Calu3 (cell line): ENCODE measurements at regions of chr5 and their contacts with region 1.

Region 1: GRCh38 chr5:96336351-96336985 is 96.6 kb downstream of the PCSK1 start:
- DNase-seq: peak; percentile 77
- H3K4me3 Mint-ChIP-seq: no peak overlapping the region
- H3K27ac Mint-ChIP-seq: no peak overlapping the region
- H3K4me1 Mint-ChIP-seq: peaks cover 29% of the 10 kb centered on the region
- H3K27me3 Mint-ChIP-seq: no peaks in the 10 kb centered on the region
- CTCF ChIP-seq: peak; percentile 76

Region 2: DNA sequence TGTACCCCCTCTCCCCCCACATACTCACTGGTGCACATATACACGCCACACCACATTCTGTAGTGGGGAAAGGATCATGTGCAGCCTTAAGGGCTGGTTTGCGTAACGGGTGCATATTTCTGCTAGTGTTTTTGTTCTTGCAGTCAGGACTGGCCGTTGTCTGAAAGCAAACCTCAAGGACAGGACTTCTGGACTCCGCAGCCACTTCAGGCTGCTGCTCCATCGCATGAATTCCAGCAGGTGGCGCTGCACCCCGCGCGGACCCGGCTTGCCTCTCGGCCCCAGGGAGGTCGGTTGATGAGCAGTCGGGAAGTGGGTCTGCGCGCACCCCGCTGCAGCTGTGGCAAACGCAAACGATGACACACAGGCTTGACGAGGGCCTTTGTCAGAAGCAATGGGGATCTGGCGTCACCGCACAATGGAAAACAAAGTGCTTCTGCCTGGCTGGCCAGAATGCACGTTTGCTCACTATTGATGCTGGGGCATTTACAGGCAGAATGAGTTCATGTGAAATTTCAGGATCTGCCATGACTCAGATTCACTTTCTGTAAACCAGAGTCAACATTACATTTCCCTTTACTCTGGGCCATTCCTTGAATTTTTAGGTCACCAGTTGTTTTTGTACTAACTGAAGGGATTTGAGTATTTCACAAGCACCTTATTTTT is 477.7 kb before region 1 on chr5:
- CTCF ChIA-PET with region 1: interaction called, 9 read pairs
- intact Hi-C with region 1: loop called (anchors 1 kb)
- DNase-seq: peak; percentile 95
- H3K4me3 Mint-ChIP-seq: peak overlapping the region; percentile 63
- H3K27ac Mint-ChIP-seq: peak overlapping the region; percentile 80
- H3K4me1 Mint-ChIP-seq: peaks cover 48% of the 10 kb centered on the region
- H3K27me3 Mint-ChIP-seq: no peaks in the 10 kb centered on the region
- CTCF ChIP-seq: peak; percentile 98

Region 3: DNA sequence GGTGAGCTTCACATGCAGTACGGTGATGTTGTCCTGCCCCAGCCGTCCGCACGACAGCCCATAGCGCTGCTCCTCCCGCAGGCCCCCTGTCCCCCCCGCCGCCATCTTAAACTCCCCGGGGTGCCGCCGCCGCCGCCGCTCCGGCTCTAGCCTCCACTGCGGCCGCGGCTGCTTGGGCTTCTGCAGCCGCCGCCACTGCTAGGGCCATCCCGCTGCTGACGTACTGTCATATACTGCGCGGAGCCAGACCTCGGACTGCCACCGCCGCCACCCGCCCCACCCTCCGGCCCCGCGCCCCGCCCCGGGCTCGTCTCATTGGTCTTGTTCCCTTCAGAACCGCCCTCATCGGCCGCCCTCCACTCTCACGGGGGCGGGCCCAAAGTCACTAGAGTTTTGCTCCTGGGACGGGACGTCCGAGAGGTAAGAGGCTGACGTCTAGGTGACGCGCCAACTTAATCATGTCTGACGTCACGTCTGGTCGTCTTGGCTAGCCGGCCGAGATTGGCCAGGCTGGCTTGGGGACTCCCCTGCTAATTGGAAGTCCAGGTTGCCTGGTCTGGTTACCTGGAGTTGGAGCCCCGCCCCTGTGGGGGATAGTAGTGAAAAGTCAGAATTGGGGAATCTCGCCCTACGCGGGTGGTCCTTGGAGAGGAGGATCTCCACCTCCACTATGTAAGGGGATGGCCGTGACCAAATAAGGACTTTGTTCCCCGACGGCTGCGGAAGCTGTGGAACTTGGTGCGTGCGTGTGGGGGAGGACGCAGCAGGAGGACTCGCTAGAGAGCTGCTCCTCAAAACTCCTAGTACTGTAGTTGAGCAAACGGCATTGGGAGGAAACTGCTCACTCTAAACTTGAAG is 374.6 kb before region 1 on chr5 and contains the start of gene ELL2:
- CTCF ChIA-PET with region 1: interaction called, 37 read pairs
- intact Hi-C with region 1: loop called (anchors 1 kb)
- DNase-seq: peak; percentile 99
- H3K4me3 Mint-ChIP-seq: peak within 1 kb of the TSS; percentile 92
- H3K27ac Mint-ChIP-seq: peak within 1 kb of the TSS; percentile 98
- H3K4me1 Mint-ChIP-seq: peaks cover 61% of the 10 kb centered on the region
- H3K27me3 Mint-ChIP-seq: no peaks in the 10 kb centered on the region
- CTCF ChIP-seq: no peak
- total RNA-seq, gene ELL2: 56.2 and 57.7 TPM in 2 replicates

Region 4: GRCh38 chr5:96079075-96079474 is 257.4 kb before region 1 on chr5:
- CTCF ChIA-PET with region 1: no interaction called
- intact Hi-C with region 1: loop called (anchors 5 kb)
- DNase-seq: no peak
- H3K4me3 Mint-ChIP-seq: no peak overlapping the region
- H3K27ac Mint-ChIP-seq: peak overlapping the region; percentile 94
- H3K4me1 Mint-ChIP-seq: peaks cover 60% of the 10 kb centered on the region
- H3K27me3 Mint-ChIP-seq: no peaks in the 10 kb centered on the region
- CTCF ChIP-seq: no peak

Region 5: DNA sequence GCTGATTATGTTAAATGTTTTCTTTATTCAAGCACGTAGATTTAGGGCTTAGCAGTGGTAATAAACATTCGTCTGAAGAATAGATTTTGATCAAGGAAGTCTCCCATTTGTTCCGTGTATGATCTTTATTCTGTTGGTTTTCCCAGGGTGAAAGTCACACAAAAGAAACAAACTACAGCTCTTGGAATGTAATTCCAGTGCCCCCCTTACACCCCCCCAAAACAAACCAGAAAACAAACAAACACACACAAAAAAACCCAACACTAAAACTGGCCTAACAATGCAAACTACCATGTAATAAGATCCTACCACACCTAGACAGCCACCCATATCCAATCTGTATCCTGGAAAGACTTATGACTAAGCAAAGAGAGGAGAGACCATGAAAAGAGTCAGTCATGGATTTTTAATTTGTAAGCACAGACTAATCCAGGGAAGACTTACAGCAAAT is 178.6 kb before region 1 on chr5:
- CTCF ChIA-PET with region 1: no interaction called
- intact Hi-C with region 1: loop called (anchors 1 kb)
- DNase-seq: no peak
- H3K4me3 Mint-ChIP-seq: peak overlapping the region; percentile 31
- H3K27ac Mint-ChIP-seq: peak overlapping the region; percentile 86
- H3K4me1 Mint-ChIP-seq: peaks cover 15% of the 10 kb centered on the region
- H3K27me3 Mint-ChIP-seq: no peaks in the 10 kb centered on the region
- CTCF ChIP-seq: no peak

Region 6: DNA sequence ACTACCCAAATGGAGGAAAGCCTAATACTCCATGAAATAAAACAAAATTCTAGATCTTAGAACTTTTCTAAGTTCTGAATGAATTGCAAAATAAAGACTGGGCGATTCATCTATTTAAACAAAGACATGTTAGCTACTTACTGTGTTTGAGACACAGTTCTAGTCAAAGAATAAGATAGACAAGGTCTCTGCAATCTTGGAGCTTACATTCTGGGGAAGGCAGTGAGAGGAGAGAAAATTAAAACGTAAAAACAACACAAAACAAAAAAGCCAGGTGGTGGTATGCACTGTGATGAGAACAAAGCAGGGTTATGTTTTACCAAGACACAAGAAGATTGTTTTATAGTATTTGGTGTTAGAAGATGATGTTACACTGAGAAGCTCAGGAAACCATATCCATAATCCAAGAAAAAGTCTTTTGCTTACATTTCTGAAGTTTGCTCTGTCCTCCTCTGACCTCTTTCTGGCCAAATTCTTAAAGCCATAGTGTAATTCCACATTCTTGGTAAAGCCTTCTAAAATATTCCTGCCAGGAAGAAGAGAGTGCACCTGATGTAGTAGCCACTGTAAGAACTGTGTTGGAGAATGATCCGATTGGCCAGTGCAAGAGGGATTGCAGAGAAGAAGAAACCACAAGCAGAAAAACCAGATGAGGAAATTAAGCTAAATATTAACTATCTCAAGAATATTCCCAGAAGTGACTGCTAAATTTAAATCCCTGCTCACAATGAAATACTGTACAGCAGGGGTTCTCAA is 121.8 kb before region 1 on chr5:
- CTCF ChIA-PET with region 1: interaction called, 11 read pairs
- intact Hi-C with region 1: no loop called
- DNase-seq: peak; percentile 43
- H3K4me3 Mint-ChIP-seq: peak overlapping the region; percentile 66
- H3K27ac Mint-ChIP-seq: peak overlapping the region; percentile 81
- H3K4me1 Mint-ChIP-seq: peaks cover 45% of the 10 kb centered on the region
- H3K27me3 Mint-ChIP-seq: no peaks in the 10 kb centered on the region
- CTCF ChIP-seq: no peak

Region 7: GRCh38 chr5:96254980-96255691 is 81.3 kb before region 1 on chr5:
- CTCF ChIA-PET with region 1: interaction called, 3 read pairs
- intact Hi-C with region 1: loop called (anchors 2 kb)
- DNase-seq: peak; percentile 67
- H3K4me3 Mint-ChIP-seq: no peak overlapping the region
- H3K27ac Mint-ChIP-seq: peak overlapping the region; percentile 65
- H3K4me1 Mint-ChIP-seq: peaks cover 47% of the 10 kb centered on the region
- H3K27me3 Mint-ChIP-seq: no peaks in the 10 kb centered on the region
- CTCF ChIP-seq: no peak